Ovary (tissue), 10 donors: ENCODE measurements at regions of chr7 and their contacts with region 1.

Region 1: DNA sequence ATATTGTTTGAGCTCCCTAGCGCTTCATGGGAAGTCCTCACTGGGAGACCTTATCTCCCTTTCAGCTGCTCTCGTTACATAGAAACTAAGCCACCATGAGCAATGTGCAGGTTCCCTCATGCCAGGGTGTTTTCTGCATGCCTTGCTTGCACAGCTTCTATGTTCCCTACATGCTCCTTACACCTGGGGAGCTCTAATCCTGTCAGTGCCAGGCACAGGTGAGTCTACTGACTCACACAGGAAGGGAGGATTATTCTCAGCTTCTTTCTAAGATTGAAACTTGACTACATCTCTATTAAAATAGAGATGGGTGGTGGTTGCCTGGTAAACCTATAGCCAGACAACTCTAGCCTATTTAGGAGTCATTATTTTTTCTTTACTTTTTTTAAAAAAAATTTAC is 375.7 kb upstream of the CDC14C start:
- DNase-seq: no peak
- H3K4me3 ChIP-seq: no peak overlapping the region
- H3K27ac ChIP-seq: no peak overlapping the region
- H3K4me1 ChIP-seq: no peaks in the 10 kb centered on the region
- H3K27me3 ChIP-seq: no peaks in the 10 kb centered on the region
- CTCF ChIP-seq: no peak
- EP300 ChIP-seq: no peak
- POLR2A ChIP-seq: no peak

Region 2: DNA sequence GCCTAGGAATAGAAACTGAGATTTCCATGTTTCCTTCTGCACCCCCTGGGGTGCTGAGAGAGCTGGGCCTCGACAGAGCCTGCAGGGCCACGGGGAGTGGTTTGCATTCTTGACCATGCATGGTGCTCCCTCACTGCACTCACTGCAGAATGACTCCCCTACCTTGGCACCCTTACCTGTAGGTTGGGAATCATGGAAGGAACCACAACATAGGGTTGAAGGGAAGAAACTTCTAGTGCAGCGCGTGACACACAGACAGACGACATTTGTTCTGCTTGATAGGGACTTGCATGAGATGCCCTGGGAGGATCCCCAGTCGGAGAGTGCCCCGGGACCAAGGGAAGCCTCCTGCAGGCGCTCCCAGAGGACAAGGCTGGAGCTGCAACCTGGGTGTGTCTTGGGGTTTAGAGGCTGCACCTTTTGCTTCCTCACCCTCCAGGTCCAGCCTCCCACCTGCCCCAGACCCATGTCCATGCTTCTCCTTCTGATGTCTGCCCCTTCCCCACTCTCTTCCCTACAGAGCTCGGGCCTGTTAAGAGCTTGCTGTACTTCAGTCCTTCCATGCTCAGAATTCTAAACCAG is 132.2 kb before region 1 on chr7:
- intact Hi-C with region 1: loop called in 1 of 4 experiments (anchors 5 kb)
- DNase-seq: no peak
- H3K4me3 ChIP-seq: no peak overlapping the region
- H3K27ac ChIP-seq: no peak overlapping the region
- H3K4me1 ChIP-seq: no peaks in the 10 kb centered on the region
- H3K27me3 ChIP-seq: no peaks in the 10 kb centered on the region
- CTCF ChIP-seq: no peak
- EP300 ChIP-seq: no peak
- POLR2A ChIP-seq: no peak